ENCODE measurements at regions of chr5 and their contacts with region 1.

Region 1: DNA sequence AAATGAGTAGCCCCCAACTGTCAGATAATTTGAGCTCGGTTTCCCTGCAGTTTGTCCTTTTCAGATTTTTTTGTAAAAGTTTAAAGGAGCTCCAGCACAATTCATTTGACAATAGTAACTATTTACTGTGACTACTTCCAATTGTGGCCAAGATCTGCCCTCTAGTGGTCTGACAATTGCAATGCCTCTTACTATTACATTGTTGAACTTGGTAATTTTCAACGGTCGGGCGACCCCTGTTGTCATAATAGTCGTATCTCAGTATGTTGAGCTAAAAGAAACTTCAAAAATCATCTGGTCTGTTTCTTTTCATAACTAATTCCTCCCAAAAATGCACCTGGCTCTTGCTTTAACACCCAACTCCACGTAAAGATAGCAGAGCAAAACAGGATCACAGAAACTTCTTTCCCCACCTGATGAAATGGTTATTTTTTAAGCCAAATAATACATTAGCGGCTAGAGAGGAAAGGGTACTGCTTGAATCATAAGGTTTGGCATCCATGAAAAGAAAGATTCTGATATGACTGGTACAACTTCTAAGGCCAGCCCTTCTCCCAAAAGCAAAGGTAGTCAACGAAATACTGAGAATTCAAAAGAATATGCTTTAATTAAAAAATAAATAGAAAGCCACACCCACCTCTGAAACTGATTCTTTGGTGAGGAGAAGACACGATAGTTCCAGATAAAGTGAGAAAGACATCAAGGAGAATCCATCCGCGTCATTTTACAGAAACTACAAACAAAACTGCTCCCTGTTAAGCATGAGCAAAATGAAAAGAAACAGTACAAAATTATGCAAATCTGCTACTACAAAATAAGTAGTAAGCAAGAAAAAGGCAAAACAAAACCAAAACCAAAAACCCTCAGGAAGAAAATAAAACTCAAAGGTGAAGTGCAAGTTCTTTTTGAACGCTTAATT is 76.9 kb upstream of the HTR4 start:
- DNase-seq: peak; percentile 89 to 95 (median 92)
- H3K4me3 ChIP-seq: peak overlapping the region in 1 of 7 experiments; percentile 6
- H3K27ac ChIP-seq: no peak overlapping the region
- H3K4me1 ChIP-seq: peaks cover 0 to 8% (median 1%) of the 10 kb centered on the region in 4 experiments
- H3K27me3 ChIP-seq: no peaks in the 10 kb centered on the region

Region 2: DNA sequence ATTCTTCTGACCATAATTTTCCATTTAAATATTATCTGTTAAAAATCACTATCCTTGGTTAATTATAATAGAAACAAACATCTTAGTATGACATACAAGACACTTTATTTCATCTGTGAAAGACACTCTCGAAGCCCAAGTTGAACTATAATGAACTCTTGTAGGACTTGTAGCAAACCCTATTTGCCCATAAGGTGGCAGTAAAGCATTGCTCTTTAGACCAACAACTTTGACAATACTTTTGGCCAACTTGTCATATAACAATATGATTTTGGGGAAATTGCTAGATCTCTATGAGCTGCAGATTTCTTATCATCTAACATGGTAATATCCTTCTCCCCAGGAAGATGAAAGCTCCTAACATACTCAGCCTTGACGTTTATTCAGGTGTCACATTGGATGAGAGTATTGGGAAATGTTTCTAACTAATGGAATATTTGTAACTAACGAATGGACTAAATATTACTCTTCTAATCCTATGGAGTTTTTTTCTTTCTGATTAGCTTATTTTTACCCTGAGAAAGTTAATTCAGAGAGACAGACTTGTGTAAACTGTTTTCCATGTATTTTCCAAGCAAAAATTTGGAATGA is 551.9 kb before region 1 on chr5:
- CTCF ChIA-PET with region 1: interaction called, 96 read pairs
- POLR2A ChIA-PET with region 1: no interaction called
- DNase-seq: peak; percentile 71 to 87 (median 84)
- H3K4me3 ChIP-seq: no peak overlapping the region
- H3K27ac ChIP-seq: no peak overlapping the region
- H3K4me1 ChIP-seq: no peaks in the 10 kb centered on the region
- H3K27me3 ChIP-seq: no peaks in the 10 kb centered on the region

Region 3: DNA sequence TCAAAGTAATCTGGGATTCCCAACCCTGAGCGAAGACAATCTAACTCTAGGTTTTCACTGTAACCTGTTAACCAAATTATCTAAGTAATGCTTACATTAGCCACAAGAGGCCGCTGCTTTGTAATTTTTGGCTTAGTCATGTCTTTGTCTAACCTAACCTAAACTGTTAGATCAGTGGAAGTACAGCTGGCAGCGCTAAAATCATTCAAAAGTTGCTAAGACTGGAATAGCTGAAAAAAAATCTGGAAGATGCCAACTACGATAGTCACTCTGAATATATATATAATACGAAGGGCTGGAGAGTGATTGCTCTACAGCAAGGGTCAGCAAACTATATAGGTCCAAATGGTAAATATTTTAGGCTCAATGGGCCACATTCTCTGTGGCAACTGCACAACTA is 287.2 kb before region 1 on chr5:
- CTCF ChIA-PET with region 1: interaction called, 251 read pairs
- POLR2A ChIA-PET with region 1: no interaction called
- DNase-seq: peak; percentile 65 to 83 (median 80)
- H3K4me3 ChIP-seq: no peak overlapping the region
- H3K27ac ChIP-seq: no peak overlapping the region
- H3K4me1 ChIP-seq: no peaks in the 10 kb centered on the region
- H3K27me3 ChIP-seq: no peaks in the 10 kb centered on the region

Region 4: DNA sequence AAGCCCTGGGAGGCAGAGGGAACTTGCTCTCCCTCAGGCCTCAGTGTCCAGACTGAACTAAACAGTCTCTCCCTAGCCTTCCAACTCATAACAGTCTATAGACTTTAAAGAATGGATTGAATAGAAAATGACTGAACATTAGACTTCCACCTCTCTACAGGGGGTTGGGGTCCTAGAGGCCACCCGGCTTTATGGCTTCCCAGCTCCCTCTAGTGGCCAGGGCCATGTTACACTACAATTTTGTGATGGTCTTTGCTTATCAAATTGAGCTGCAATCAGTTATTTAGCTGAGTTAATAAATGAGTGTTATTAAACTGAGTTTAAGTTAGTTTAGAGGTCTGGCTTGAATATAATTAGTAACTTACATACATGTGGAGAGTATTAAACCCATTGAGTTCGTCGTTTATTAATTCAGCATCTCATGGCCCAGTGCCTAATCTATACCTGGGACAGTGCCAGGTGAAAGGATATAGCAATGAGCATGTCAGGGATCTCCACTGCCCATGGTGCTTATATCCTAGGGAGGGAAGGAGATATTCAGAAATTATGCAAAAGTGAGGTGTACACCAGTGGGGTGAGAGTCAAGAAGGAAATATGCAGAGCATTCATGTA is 226.5 kb after region 1 on chr5:
- CTCF ChIA-PET with region 1: interaction called, 361 read pairs
- POLR2A ChIA-PET with region 1: no interaction called
- DNase-seq: peak; percentile 54 to 77 (median 73)
- H3K4me3 ChIP-seq: no peak overlapping the region
- H3K27ac ChIP-seq: no peak overlapping the region
- H3K4me1 ChIP-seq: peaks cover 0 to 11% (median 2%) of the 10 kb centered on the region in 4 experiments
- H3K27me3 ChIP-seq: no peaks in the 10 kb centered on the region

Region 5: DNA sequence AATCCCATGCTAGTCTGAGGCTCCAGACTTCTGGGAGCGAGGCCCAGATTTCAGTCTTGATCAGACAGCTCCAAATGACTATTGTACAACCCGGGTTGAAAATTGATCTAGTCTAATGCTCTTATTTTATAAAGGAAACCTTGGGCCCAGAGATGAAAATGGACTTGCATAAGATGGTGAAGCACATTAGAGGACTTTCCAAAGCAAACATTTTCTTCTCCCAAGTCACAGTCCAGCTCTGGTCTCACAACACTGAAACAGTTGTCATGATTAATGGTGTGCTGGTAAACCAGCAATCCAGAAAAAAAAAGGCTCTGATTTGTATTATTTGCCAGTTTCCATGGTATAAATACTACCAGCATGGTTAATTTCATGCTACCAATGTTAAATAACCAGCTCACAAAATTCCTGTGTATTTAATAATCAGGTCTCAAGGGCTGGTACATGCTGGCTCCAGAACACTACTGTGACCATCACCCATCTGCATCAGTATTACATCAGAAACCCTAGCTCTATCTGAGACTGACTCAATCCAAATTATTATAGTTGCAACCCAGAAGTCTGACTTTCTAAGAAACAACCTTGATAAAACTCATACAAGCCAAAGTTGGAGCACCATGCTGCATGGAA is 377.6 kb after region 1 on chr5:
- CTCF ChIA-PET with region 1: interaction called, 107 read pairs
- POLR2A ChIA-PET with region 1: no interaction called
- DNase-seq: no peak
- H3K4me3 ChIP-seq: no peak overlapping the region
- H3K27ac ChIP-seq: no peak overlapping the region
- H3K4me1 ChIP-seq: peaks cover 0 to 3% (median 0%) of the 10 kb centered on the region in 4 experiments
- H3K27me3 ChIP-seq: no peaks in the 10 kb centered on the region